ENCODE measurements at regions of chr2 and their contacts with region 1.

Region 1: DNA sequence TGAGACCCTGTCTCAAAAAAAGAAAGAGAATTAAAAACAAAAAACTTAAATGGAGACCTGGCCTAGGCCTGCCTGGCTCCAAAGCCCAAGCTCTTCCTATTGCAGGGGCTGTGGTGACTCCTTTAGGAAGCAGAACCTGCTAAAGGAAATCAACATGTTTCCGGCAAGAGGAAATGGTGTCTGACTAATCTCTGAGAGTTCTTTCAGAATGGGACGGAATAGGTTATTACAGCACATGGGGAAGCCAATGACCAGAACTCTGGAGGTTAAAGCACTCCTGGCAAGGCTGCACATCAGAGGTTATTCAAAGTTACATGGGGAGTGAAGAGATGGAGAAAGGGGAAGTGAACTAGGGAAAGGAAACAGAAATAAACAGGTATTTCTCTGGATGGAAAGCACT is 21.4 kb downstream of the KIF3C start:
- DNase-seq: peak in 1 of 2 donors; percentile 49
- ATAC-seq: peak; percentile 75 to 94 (median 91)
- H3K4me3 ChIP-seq: no peak overlapping the region
- H3K27ac ChIP-seq: peak overlapping the region in 6 of 10 donors; percentile 22 to 63 (median 47)
- H3K4me1 ChIP-seq: peaks cover 0 to 26% (median 18%) of the 10 kb centered on the region in 9 donors
- H3K27me3 ChIP-seq: no peaks in the 10 kb centered on the region
- CTCF ChIP-seq: no peak

Region 2: DNA sequence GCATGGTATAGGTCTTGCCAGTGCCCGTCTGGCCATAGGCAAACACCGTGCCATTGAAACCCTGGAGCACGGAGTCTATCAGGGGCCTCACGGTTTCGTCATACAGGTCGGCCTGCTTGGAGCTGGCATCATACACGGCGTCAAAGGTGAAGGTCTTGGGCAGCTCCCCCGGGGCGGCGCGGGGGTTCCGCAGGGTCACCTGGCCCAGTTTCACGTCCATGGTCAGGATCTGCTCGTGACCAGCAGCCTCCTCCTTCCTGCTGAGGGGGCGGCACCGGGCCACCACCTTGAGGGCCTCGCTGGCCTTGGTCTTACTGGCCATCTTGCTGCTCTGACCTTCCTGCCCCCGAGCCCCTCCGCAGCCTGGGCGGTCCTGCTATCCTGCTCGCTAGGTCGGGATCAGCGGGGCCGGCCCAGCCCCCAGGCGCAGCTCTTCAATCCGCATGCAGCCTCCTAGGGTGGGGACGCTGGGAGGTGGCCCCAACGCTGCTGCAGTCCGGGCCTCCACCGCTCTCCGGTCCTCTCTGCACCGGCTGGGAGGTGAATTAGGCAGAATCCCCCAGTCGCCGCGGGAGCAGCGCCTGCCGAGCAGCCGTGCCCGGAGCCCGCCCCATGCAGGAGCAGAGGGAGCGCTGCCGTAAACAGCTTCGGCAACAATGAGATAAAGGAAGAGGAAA is 20.8 kb after region 1 on chr2:
- intact Hi-C with region 1: loop called in 1 of 10 experiments (anchors 2 kb)
- DNase-seq: peak in 1 of 2 donors; percentile 26
- ATAC-seq: peak; percentile 29 to 61 (median 40)
- H3K4me3 ChIP-seq: peak overlapping the region; percentile 69 to 95 (median 88)
- H3K27ac ChIP-seq: peak overlapping the region in 7 of 10 donors; percentile 61 to 81 (median 68)
- H3K4me1 ChIP-seq: peaks cover 0 to 48% (median 15%) of the 10 kb centered on the region in 9 donors
- H3K27me3 ChIP-seq: no peaks in the 10 kb centered on the region
- CTCF ChIP-seq: no peak